Common myeloid progenitor, CD34-positive (primary cell): ENCODE measurements at regions of chr5 and their contacts with region 1.

Region 1: DNA sequence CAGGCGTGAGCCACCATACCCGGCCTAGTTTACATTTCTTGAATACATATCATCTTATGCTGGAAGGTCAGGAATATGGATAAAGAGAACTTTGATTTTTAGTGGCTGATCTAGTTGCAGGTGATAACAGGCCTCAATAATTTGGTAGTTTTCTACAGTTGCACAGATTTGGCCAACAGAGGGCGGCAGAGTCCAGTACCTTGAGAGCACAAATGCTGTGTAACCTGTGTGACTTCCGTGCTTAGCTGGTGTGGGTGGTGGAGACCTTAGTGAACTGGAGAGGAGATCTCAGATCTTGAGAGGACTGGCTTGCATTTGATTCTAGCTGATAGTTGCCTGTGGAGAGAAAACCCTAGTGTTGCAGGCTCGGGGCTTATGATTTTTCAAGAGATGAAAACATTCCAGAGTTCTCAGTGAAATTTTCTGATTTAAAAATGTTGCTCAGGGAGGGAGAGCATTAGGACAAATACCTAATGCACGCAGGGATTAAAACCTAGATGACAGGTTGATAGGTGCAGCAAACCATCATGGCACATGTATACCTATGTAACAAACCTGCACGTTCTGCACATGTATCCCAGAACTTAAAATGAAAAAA is 17.4 kb upstream of the GPR151 start:
- DNase-seq: peak; percentile 59 to 83 (median 77)
- H3K4me3 ChIP-seq: no peak overlapping the region
- H3K27ac ChIP-seq: no peak overlapping the region
- H3K4me1 ChIP-seq: no peaks in the 10 kb centered on the region
- H3K27me3 ChIP-seq: no peaks in the 10 kb centered on the region

Region 2: DNA sequence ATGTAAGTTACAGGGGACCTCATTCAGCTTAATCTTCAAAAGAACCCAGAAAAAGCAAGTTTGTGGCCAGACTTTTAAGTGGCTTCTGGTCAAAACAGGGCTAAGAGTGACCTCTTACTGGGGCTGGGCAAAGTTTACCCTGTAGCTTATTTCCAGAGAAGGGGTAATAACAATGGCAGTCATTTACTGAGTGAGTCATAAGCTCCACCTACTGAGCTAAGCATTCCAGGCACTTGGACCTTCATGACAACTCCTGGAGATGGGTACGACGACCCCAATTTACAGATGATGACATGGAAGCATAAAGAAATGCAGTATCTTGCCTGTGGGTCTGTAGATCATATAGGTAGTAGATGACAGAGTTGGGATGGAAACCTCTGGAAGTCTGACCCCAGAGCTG is 12.6 kb before region 1 on chr5:
- CTCF ChIA-PET with region 1: interaction called, 30 read pairs
- POLR2A ChIA-PET with region 1: no interaction called
- DNase-seq: no peak
- H3K4me3 ChIP-seq: no peak overlapping the region
- H3K27ac ChIP-seq: no peak overlapping the region
- H3K4me1 ChIP-seq: peaks cover 0 to 4% (median 0%) of the 10 kb centered on the region in 4 experiments
- H3K27me3 ChIP-seq: peaks cover 0 to 4% (median 0%) of the 10 kb centered on the region in 5 experiments